MCF 10A (cell line): ENCODE measurements at regions of chr2 and their contacts with region 1.

Region 1: GRCh38 chr2:85302121-85302520 is 25.7 kb downstream of the TGOLN2 start:
- DNase-seq: no peak
- H3K4me3 Mint-ChIP-seq: no peak overlapping the region
- H3K27ac Mint-ChIP-seq: no peak overlapping the region
- H3K4me1 Mint-ChIP-seq: no peaks in the 10 kb centered on the region
- H3K27me3 Mint-ChIP-seq: no peaks in the 10 kb centered on the region
- CTCF ChIP-seq: no peak

Region 2: GRCh38 chr2:85076618-85077274 is 225.4 kb before region 1 on chr2:
- CTCF ChIA-PET with region 1: interaction called, 25 read pairs
- POLR2A ChIA-PET with region 1: no interaction called
- intact Hi-C with region 1: no loop called
- DNase-seq: no peak
- H3K4me3 Mint-ChIP-seq: no peak overlapping the region
- H3K27ac Mint-ChIP-seq: no peak overlapping the region
- H3K4me1 Mint-ChIP-seq: no peaks in the 10 kb centered on the region
- H3K27me3 Mint-ChIP-seq: peaks cover 24% of the 10 kb centered on the region
- CTCF ChIP-seq: no peak

Region 3: DNA sequence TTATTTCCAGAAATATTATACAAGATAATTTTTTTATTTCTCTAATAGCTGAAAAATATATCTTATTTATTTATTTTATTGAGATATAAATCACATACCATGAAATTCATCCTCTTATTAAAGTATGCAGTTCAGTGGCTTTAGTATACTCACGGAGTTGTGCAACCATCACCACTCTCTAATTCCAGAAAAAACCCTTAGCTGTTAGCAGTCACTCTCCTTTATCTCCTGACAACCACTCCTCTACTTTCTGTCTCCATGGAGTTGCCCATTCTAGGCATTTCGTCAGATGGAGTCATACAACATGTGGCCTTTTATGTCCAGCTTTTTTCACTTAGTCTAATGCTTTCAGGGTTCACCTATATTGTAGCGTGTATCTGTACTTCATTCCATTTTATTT is 102.4 kb before region 1 on chr2:
- CTCF ChIA-PET with region 1: no interaction called
- POLR2A ChIA-PET with region 1: no interaction called
- intact Hi-C with region 1: no loop called
- DNase-seq: no peak
- H3K4me3 Mint-ChIP-seq: no peak overlapping the region
- H3K27ac Mint-ChIP-seq: no peak overlapping the region
- H3K4me1 Mint-ChIP-seq: no peaks in the 10 kb centered on the region
- H3K27me3 Mint-ChIP-seq: no peaks in the 10 kb centered on the region
- CTCF ChIP-seq: no peak

Region 4: GRCh38 chr2:85266146-85267041 is 35.7 kb before region 1 on chr2:
- CTCF ChIA-PET with region 1: interaction called, 93 read pairs
- POLR2A ChIA-PET with region 1: no interaction called
- intact Hi-C with region 1: loop called (anchors 1 kb)
- DNase-seq: peak; percentile 74
- H3K4me3 Mint-ChIP-seq: no peak overlapping the region
- H3K27ac Mint-ChIP-seq: no peak overlapping the region
- H3K4me1 Mint-ChIP-seq: no peaks in the 10 kb centered on the region
- H3K27me3 Mint-ChIP-seq: no peaks in the 10 kb centered on the region
- CTCF ChIP-seq: peak; percentile 92